Colonic mucosa (tissue), 4 donors: ENCODE measurements at regions of chr17 and their contacts with region 1.

Region 1: GRCh38 chr17:27245230-27245696 is 48.7 kb upstream of the WSB1 start:
- DNase-seq: peak; percentile 88
- H3K4me3 ChIP-seq: no peak overlapping the region
- H3K27ac ChIP-seq: peak overlapping the region; percentile 57
- H3K4me1 ChIP-seq: peaks cover 11% of the 10 kb centered on the region
- H3K27me3 ChIP-seq: no peaks in the 10 kb centered on the region
- CTCF ChIP-seq: peak; percentile 60

Region 2: DNA sequence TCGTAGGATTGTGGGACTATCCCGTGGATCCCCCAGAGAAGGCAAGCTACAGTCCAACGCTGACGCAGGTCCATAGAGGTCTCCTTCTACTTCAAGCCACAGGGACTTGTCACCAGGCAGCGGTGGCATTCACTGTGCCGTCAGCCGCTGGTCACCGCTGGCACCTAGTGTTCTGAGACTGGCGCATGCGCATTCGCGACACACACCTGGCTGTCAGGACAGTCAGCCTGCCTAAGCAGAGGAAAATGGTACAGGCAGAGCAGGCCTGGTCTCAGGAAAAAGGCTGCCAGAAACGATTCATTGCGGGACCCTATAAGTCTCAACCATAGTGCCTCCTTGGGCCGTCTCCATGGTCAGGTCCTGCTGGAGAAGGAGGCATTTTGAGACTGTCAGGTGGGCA is 89.4 kb before region 1 on chr17:
- intact Hi-C with region 1: no loop called
- DNase-seq: no peak
- H3K4me3 ChIP-seq: no peak overlapping the region
- H3K27ac ChIP-seq: no peak overlapping the region
- H3K4me1 ChIP-seq: no peaks in the 10 kb centered on the region
- H3K27me3 ChIP-seq: no peaks in the 10 kb centered on the region
- CTCF ChIP-seq: no peak

Region 3: GRCh38 chr17:27293898-27294688 is 48.8 kb after region 1 on chr17 and contains the start of gene WSB1:
- intact Hi-C with region 1: loop called (anchors 5 kb)
- DNase-seq: peak; percentile 94
- H3K4me3 ChIP-seq: peak within 1 kb of the TSS; percentile 78
- H3K27ac ChIP-seq: peak within 1 kb of the TSS; percentile 99
- H3K4me1 ChIP-seq: peaks cover 9% of the 10 kb centered on the region
- H3K27me3 ChIP-seq: no peaks in the 10 kb centered on the region
- CTCF ChIP-seq: no peak
- total RNA-seq, gene WSB1: 94.2 to 150 TPM

Region 4: DNA sequence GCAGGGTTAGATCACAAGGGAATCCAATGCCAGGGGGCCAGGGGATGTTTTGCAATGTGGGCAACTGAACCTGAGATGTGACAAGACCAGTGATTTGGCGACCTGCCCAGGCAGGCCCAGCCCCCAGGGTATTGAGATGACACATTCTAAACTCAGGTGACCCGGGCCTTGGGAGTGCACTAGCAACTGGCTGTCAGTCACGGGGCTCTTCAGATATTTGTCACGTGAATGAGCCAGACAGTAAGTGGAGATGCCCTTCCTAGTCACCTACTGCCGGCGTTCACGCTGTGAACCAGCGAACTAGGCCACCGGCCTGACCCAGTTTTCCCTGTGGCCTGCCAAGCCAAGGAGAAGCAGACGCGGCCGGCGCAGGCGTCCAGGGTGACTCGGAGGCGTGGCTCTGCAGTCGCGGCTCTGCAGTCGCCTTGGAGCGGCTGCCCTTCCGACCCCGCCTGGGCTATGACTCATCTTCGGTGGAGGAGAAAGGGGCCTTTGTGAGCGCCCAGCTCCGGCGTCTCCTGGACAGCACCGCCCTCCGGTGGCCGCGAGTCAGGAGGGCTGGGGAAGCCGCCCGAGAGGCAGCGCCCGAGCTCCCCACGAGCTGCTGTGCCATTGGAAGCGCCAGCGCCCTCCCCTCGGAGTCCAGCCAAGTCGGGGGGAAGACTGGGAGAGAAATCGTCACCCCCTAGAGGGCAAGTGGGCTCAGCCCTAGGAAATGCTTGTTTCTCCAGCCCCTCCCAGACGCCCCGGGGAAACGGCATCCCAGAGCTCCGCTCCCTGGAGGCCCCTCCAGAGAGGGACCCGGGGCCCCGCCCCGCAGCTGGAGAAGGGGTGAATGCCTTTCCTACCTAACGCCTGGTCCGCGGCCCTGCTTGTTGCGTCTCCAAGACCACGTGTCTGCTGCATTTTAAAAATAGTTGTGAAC is 87.5 kb after region 1 on chr17:
- intact Hi-C with region 1: loop called (anchors 2 kb)
- DNase-seq: peak; percentile 99
- H3K4me3 ChIP-seq: peak overlapping the region; percentile 41
- H3K27ac ChIP-seq: peak overlapping the region; percentile 83
- H3K4me1 ChIP-seq: peaks cover 3% of the 10 kb centered on the region
- H3K27me3 ChIP-seq: no peaks in the 10 kb centered on the region
- CTCF ChIP-seq: peak; percentile 79